Heart right ventricle (tissue), 16 donors: ENCODE measurements at regions of chr13 and their contacts with region 1.

Region 1: GRCh38 chr13:97221989-97222700 is at the start of gene MBNL2:
- DNase-seq: peak; percentile 88 to 93
- ATAC-seq: peak; percentile 94 to 97 (median 96)
- H3K4me3 ChIP-seq: peak within 1 kb of the TSS; percentile 51 to 84 (median 62)
- H3K27ac ChIP-seq: peak within 1 kb of the TSS; percentile 78 to 93 (median 90)
- H3K4me1 ChIP-seq: peaks cover 6 to 37% (median 31%) of the 10 kb centered on the region in 9 donors
- H3K27me3 ChIP-seq: no peaks in the 10 kb centered on the region
- CTCF ChIP-seq: no peak
- total RNA-seq, gene MBNL2: 59.7 to 95.0 (median 85.2) TPM

Region 2: GRCh38 chr13:97082461-97083207 is 139.5 kb before region 1 on chr13:
- intact Hi-C with region 1: no loop called
- DNase-seq: no peak
- ATAC-seq: no peak
- H3K4me3 ChIP-seq: no peak overlapping the region
- H3K27ac ChIP-seq: no peak overlapping the region
- H3K4me1 ChIP-seq: peaks cover 0 to under 1% (median 0%) of the 10 kb centered on the region in 9 donors
- H3K27me3 ChIP-seq: no peaks in the 10 kb centered on the region
- CTCF ChIP-seq: no peak

Region 3: DNA sequence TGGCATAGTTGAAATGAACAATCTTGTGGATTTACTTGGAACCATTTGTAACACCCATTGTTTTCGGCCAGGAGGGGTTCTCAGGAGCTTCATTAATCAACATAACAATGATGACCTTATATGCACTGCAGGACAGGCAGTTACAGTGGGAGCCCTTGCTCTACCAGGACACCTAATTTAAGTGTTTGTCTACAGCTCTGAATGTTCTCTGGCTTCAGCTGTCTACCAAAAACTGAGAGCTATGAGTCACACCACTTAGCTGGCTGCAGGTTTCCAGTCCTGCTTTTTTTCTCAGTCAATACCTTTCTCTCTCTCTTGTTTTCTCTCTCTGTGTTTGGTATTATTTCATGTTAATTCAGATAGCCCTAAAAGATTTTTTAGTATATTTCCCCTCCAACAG is 105.4 kb before region 1 on chr13:
- intact Hi-C with region 1: loop called in 2 of 10 experiments (anchors 2 to 5 kb)
- DNase-seq: peak in 1 of 2 donors; percentile 31
- ATAC-seq: peak; percentile 42 to 94 (median 88)
- H3K4me3 ChIP-seq: no peak overlapping the region
- H3K27ac ChIP-seq: peak overlapping the region; percentile 36 to 88 (median 68)
- H3K4me1 ChIP-seq: peaks cover 4 to 42% (median 39%) of the 10 kb centered on the region in 9 donors
- H3K27me3 ChIP-seq: peaks cover 0 to 5% (median 0%) of the 10 kb centered on the region in 7 donors
- CTCF ChIP-seq: no peak

Region 4: DNA sequence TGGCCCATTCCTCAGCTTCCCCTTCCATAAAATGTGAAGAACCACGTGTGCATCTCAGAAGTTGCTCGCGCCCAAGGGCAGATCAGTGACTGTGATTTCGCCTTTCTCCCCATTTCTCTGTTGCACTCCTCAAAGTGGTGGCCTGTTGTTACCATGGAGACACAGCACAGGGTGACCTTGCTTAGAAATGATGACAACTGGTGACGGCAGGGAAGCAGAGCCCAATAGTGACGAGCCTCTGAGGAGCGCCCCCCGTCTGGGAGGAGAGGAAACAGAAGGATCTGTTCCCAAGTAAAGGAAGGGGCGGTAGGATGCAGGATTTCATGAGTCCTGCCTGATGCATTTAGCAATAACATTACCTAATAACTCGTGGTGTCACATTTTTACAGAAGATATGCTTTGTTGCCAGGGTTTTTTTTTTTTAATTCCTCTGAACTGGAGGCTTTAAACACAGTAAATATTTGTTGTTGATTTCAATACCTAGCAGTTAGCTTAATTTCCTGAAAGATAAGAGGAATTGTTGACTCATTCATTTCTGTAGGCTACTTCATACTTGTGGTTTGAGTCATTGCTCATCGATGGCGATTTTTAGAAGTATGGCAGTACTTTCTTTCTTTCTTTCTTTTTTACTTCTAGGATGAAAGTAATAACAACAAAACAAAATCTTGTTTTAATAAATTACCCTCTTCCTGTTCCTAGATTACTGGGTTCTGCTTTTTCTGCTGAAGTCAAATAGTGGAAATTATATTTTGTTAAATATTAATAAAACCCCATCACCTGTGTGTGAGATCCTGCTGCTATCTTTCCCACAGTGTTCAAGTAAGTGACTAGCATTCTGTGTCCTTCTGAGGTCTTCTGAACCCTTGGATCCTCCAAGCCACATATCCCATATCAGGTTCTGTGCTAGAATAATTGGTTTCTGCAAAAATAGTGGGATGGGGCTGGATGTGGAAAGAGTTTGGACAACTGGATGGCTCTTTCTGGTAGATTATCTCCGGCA is 36.0 kb after region 1 on chr13:
- intact Hi-C with region 1: loop called in 2 of 10 experiments (anchors 5 kb)
- DNase-seq: peak; percentile 47 to 73
- ATAC-seq: peak; percentile 55 to 82 (median 66)
- H3K4me3 ChIP-seq: no peak overlapping the region
- H3K27ac ChIP-seq: peak overlapping the region in 9 of 10 donors; percentile 42 to 80 (median 77)
- H3K4me1 ChIP-seq: peaks cover 12 to 96% (median 86%) of the 10 kb centered on the region in 9 donors
- H3K27me3 ChIP-seq: no peaks in the 10 kb centered on the region
- CTCF ChIP-seq: peak in 4 of 9 donors; percentile 13 to 44 (median 29)

Region 5: DNA sequence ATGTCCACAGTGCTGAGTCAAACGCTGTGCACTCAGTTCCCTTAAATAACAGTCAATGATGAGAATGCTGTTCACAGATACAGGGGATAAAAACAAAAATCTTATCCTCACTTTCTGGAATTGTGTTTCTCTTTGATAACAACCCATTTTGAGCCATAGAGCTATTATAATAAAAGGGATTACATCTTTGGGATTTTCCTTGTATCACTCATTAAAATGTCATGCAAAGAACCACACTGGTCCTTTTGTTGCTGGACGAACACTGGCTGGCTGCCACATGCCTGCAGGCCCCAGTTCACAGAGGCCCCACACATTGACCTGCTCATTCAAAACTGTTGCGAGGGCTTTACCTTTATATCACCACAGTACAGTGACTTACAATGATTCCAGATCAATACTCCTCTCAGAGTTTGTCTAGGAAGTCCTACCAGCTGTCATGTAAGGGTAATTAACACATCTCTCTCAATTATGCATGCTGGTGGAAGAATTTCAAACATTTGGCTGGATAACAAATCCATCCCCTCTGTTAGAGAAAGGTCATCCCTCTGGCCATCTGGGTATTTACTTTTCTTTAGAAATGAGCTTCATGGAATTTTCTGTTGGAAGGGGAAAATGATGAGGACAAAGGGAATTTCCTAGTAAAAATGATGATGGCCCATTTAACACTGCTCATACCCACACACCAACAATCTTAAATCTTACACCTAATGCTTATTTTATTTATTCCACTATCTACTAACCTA is 85.9 kb after region 1 on chr13:
- intact Hi-C with region 1: no loop called
- DNase-seq: peak; percentile 44 to 48
- ATAC-seq: peak; percentile 41 to 77 (median 60)
- H3K4me3 ChIP-seq: no peak overlapping the region
- H3K27ac ChIP-seq: peak overlapping the region in 9 of 10 donors; percentile 22 to 74 (median 38)
- H3K4me1 ChIP-seq: peaks cover 10 to 88% (median 42%) of the 10 kb centered on the region in 9 donors
- H3K27me3 ChIP-seq: no peaks in the 10 kb centered on the region
- CTCF ChIP-seq: no peak

Region 6: DNA sequence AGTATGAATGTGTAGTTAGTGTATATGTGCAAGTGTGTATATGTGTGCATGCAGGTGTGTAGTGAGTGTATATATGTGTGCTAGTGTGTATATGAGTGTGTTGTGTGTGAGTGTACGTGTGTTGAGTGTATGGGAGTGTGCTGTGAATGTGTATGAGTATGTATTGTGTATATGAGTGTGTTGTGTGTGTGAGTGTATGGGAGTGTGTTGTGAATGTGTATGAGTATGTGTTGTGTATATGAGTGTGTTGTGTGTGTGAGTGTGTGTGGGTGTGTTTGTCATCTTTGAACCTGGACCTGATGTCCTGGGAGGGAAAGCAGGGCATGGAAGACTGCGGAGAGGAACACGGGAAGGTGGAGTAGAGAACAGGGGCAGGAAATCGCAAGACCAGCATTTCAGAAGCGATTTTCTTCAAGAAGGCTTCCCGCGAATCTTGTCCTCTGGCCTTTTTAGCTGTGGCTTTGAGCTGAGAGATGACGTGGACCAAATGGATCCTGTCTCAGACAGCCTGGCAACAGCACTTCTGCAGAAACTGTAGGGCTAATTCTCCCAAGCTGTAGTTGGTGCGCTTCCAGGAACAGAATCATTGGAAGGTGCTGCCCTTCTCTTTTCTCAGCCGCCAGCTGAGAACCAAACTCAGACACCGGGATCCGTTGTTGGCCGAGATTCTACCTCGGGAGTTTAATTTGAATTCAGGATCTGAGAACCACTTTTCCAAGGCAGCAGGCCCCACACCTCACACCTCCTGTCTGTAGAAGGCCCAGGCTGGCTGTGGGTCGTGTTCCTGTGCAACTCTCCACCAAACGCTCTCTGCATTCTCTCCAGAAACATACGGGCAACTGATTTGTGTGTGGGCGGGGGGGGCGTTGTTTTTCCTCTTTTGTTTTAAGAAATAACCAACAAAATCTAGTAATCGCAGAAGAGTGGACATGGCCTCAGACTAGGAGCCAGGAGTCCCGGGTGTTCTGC is 117.2 kb after region 1 on chr13:
- intact Hi-C with region 1: loop called in 8 of 10 experiments (anchors 1 to 10 kb)
- DNase-seq: peak in 1 of 2 donors; percentile 66
- ATAC-seq: peak; percentile 57 to 88 (median 78)
- H3K4me3 ChIP-seq: no peak overlapping the region
- H3K27ac ChIP-seq: peak overlapping the region in 9 of 10 donors; percentile 42 to 81 (median 70)
- H3K4me1 ChIP-seq: peaks cover 0 to 76% (median 40%) of the 10 kb centered on the region in 9 donors
- H3K27me3 ChIP-seq: no peaks in the 10 kb centered on the region
- CTCF ChIP-seq: no peak

Region 7: DNA sequence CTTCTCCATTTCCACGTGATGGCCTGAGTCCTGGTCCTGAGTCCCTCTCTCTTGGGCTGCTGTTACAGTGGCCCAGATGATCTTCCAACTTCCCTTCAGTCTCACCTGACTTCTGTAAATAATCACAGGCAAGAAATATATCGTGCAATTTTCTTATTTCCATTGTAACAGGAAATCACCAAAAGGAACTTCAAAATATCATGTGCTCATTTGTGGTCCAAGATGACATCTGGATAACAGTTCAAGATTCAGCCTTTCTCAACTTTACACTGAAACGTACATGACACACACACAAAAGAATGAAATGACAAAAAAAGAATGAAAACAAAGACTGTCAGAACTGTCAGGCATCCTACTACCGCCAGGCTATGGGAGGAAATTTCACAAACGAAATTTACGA is 189.8 kb after region 1 on chr13:
- intact Hi-C with region 1: no loop called
- DNase-seq: no peak
- ATAC-seq: peak in 3 of 8 donors; percentile 45 to 77 (median 46)
- H3K4me3 ChIP-seq: no peak overlapping the region
- H3K27ac ChIP-seq: peak overlapping the region in 1 of 10 donors; percentile 1
- H3K4me1 ChIP-seq: peaks cover 0 to 24% (median 4%) of the 10 kb centered on the region in 9 donors
- H3K27me3 ChIP-seq: no peaks in the 10 kb centered on the region
- CTCF ChIP-seq: no peak

Region 8: DNA sequence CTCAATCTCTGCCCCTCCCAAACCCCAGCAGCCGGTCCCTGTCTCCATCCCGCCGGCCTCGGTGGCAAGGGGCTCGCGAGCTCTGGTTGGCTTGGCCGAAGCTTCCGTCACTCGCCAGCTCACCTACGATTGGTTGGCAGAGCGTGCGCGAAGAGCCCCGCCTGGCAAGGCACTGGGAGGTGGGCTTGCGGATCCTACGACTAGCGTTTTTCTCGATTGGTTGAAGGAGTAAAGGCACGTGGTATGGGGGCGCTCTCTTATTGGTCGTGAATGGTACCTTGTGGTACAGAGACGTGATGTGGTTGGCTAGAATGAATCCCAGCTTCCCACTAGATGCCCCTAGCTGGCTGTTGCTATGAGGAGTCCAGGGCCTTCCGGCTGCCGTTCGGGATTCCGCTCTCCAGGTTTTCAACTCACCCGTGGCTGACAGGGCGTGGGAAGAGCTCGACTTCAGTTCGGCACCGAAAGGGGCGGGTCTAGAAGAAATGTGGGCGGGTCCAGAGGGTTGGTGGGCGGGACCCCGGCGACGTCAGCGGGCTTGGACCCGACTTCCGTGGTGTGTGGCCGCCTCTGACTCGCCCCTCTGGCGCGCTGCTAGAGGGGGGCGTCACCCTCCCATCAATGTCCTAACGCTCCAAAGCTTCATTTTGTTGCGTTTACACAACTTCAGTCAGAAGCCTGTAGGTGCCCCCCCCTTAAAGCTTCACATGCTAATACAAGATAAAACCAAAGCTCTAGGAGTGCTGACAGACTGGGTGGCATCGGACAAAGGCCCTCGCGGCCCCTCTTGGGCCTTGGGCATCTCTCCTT is 211.0 kb after region 1 on chr13:
- intact Hi-C with region 1: loop called in 6 of 10 experiments (anchors 2 to 10 kb)
- DNase-seq: peak; percentile 98 to 99
- ATAC-seq: peak; percentile 91 to 98 (median 94)
- H3K4me3 ChIP-seq: peak overlapping the region; percentile 66 to 98 (median 84)
- H3K27ac ChIP-seq: peak overlapping the region; percentile 95 to 100 (median 99)
- H3K4me1 ChIP-seq: peaks cover 0 to 54% (median 37%) of the 10 kb centered on the region in 9 donors
- H3K27me3 ChIP-seq: no peaks in the 10 kb centered on the region
- CTCF ChIP-seq: no peak